ENCODE measurements at regions of chr15 and their contacts with region 1.

Region 1: DNA sequence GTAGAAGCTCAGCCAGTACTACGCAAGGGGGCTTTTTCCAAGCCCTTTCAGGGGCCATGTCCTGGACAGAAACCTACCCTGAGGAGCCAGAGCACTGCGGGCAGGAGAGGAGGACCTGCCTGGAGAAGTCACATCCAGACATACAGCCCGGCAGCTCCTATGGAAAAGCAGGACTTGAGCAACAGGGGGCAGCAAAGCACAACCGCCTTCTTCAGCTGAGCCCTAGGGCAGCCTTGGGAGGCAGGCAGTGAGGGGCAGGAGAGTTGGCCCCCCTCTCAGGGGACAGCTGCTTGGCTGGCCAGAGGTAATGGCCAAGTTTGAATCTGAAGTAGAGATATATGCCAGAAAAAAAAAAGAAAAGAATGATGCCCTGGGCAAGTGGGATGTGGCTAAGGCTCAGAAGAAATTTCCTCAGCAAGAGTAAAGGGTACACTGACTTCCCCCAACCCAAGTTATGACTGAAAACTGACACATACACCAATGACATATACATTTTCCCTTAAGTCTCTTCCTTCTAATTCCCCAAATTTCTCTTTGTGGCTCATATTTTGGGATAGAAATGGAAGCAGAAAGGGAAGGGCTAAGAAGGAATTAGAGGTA is 56.9 kb downstream of the CYP19A1 start:
- DNase-seq: no peak
- ATAC-seq: peak; percentile 93
- H3K4me3 ChIP-seq: no peak overlapping the region
- H3K27ac ChIP-seq: no peak overlapping the region
- H3K4me1 ChIP-seq: peaks cover 10% of the 10 kb centered on the region
- H3K27me3 ChIP-seq: peaks cover 0 to under 1% of the 10 kb centered on the region in 2 experiments; a peak in 1 of 4 replicates
- CTCF ChIP-seq: peak; percentile 61 to 71 (median 68); a peak in 5 of 6 replicates
- EP300 ChIP-seq: no peak
- POLR2A ChIP-seq: no peak
- RAD21 ChIP-seq: peak; percentile 75

Region 2: DNA sequence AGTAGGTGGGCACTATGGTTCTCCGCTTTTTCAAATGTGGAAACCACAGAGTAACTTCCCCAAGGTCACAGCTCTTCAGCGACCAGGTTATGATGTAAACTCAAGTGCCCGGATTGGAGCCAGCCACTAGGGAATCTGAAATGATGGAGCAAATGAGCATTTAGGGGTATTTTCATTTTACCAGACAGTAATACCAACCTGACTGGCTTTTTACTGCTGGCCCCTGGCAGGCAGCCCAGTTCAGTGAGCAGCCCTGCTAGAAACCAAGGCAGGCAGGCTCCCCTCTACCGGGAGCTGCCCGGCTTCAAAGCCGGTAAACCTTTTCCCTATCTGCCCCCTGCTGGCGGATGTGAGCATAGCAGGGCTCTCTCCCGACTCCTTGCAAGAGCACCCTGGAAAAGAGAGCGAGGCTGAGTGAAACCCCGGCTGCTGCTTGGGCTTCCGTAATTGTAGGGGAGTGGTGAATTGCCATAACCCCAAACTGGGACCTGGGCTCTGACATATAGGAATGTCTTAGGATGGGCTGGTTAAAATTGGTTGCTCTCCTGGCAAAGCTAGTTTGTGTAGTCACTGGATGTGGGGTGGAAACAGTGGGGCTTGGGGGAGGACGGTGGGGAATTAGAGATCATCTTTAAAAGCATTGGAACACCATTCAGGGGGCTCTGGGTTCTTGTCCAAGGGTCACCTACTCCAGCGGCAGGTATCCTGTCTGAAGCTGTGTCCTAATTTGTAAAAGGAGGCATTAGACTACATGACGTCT is 88.8 kb before region 1 on chr15:
- CTCF ChIA-PET with region 1: interaction called, 7 read pairs
- POLR2A ChIA-PET with region 1: no interaction called
- RAD21 ChIA-PET with region 1: interaction called, 3 read pairs
- SMC1A ChIA-PET with region 1: interaction called, 12 read pairs
- in situ Hi-C with region 1: no loop called
- intact Hi-C with region 1: no loop called
- DNase-seq: peak; percentile 20
- ATAC-seq: peak; percentile 97
- H3K4me3 ChIP-seq: no peak overlapping the region
- H3K27ac ChIP-seq: no peak overlapping the region
- H3K4me1 ChIP-seq: no peaks in the 10 kb centered on the region
- H3K27me3 ChIP-seq: no peaks in the 10 kb centered on the region; a peak in 2 of 4 replicates
- CTCF ChIP-seq: peak; percentile 91 to 96 (median 92)
- EP300 ChIP-seq: no peak
- POLR2A ChIP-seq: no peak
- RAD21 ChIP-seq: peak; percentile 79

Region 3: GRCh38 chr15:51202783-51203182 is 78.7 kb before region 1 on chr15:
- CTCF ChIA-PET with region 1: no interaction called
- POLR2A ChIA-PET with region 1: no interaction called
- RAD21 ChIA-PET with region 1: no interaction called
- SMC1A ChIA-PET with region 1: no interaction called
- in situ Hi-C with region 1: no loop called
- intact Hi-C with region 1: no loop called
- DNase-seq: no peak
- ATAC-seq: no peak
- H3K4me3 ChIP-seq: no peak overlapping the region
- H3K27ac ChIP-seq: no peak overlapping the region
- H3K4me1 ChIP-seq: no peaks in the 10 kb centered on the region
- H3K27me3 ChIP-seq: peaks cover 0 to 4% of the 10 kb centered on the region in 2 experiments; a peak in 1 of 4 replicates
- CTCF ChIP-seq: no peak
- EP300 ChIP-seq: no peak
- POLR2A ChIP-seq: no peak
- RAD21 ChIP-seq: no peak

Region 4: DNA sequence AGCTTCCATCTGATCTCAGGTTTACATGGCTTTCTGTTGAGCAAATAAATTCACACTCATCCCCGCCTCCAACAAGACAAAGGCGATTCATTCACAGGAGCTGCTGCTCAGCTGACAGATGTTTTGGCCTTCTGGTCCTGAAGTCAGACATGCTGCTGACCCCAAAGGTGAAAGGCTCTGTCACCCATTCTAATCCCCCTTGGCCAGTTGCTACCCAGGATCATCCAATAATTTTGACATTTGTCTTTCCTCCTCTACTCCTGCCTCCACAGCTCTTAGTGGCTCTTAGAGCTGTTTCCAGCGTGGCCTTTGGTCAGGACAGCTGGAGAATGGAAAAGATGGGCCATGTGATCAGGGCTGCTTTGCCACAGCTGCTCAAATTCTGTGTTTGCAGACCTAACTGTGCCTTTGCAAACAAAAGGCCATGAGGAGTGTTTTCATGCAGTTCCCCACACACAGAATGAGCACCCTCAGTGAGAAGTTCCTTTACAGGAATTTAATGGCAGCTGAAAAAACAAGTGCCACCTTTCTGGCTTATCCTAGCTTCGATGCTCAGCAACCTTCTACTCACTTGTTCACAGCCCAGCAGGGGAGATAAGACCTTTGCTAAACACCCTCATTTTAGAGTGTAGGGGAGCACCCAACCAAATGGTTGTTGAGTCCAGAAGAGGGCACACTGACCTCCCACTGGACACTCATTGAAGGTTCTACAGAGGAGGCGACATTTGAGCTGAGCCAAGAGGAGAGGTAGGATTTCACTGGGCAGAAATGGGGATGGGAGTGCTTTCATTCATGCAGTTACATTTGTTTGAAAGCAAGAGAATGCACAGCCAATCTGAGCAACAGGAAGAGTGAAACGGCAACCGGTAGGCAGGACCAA is 18.0 kb after region 1 on chr15:
- CTCF ChIA-PET with region 1: interaction called, 43 read pairs
- POLR2A ChIA-PET with region 1: no interaction called
- RAD21 ChIA-PET with region 1: interaction called, 7 read pairs
- SMC1A ChIA-PET with region 1: interaction called, 31 read pairs
- in situ Hi-C with region 1: no loop called
- intact Hi-C with region 1: no loop called
- DNase-seq: no peak
- ATAC-seq: no peak
- H3K4me3 ChIP-seq: no peak overlapping the region
- H3K27ac ChIP-seq: no peak overlapping the region
- H3K4me1 ChIP-seq: no peaks in the 10 kb centered on the region
- H3K27me3 ChIP-seq: peaks cover 0 to 3% of the 10 kb centered on the region in 2 experiments; a peak in 3 of 4 replicates
- CTCF ChIP-seq: no peak
- EP300 ChIP-seq: no peak
- POLR2A ChIP-seq: no peak
- RAD21 ChIP-seq: no peak

Region 5: GRCh38 chr15:51314426-51315337 is 33.2 kb after region 1 on chr15:
- CTCF ChIA-PET with region 1: no interaction called
- POLR2A ChIA-PET with region 1: no interaction called
- RAD21 ChIA-PET with region 1: no interaction called
- SMC1A ChIA-PET with region 1: no interaction called
- in situ Hi-C with region 1: no loop called
- intact Hi-C with region 1: no loop called
- DNase-seq: no peak
- ATAC-seq: no peak
- H3K4me3 ChIP-seq: no peak overlapping the region
- H3K27ac ChIP-seq: no peak overlapping the region
- H3K4me1 ChIP-seq: no peaks in the 10 kb centered on the region
- H3K27me3 ChIP-seq: peaks cover 0 to 8% of the 10 kb centered on the region in 2 experiments; a peak in 2 of 4 replicates
- CTCF ChIP-seq: no peak
- EP300 ChIP-seq: no peak
- POLR2A ChIP-seq: no peak
- RAD21 ChIP-seq: no peak

Region 6: DNA sequence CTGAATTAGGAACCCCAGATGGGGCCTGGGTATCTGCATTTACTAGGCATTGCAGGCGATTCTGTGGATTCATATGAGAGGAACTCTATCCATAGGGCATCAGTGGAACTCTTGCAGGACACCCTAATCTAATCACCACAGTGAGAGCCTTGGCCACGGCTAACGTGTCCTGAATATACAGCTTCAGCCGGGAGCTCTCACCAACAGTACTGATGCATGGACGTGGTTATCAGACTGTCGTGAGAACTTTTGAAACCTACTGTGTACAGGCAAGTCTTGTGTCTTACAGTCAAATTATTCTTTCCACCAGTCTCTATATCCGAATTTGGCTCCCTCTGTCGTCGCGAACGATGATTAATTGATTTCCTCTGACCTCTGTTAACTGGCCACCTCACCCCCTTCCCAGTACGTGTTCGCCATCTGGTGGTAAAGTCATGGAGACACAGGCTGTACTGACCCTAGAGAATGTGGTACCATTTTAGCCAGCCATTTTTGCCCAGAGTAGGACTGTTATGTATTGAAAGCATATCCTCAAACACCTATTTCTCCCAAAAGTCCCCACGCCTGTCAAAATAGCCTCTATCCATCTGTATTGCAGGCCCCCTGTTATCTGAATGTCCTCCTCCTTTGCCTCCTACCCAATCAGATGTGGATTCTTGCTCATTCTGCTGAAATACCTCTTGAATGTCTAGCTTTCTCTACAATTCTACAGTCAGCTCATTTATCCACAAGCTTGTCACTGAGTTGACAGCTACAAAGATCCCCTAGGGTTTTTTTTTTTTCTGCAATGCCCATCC is 99.7 kb after region 1 on chr15:
- CTCF ChIA-PET with region 1: interaction called, 111 read pairs
- POLR2A ChIA-PET with region 1: no interaction called
- RAD21 ChIA-PET with region 1: interaction called, 32 read pairs
- SMC1A ChIA-PET with region 1: interaction called, 60 read pairs
- in situ Hi-C with region 1: loop called (anchors 5 kb)
- intact Hi-C with region 1: loop called (anchors 1 kb)
- DNase-seq: peak; percentile 34
- ATAC-seq: peak; percentile 98
- H3K4me3 ChIP-seq: no peak overlapping the region
- H3K27ac ChIP-seq: no peak overlapping the region
- H3K4me1 ChIP-seq: no peaks in the 10 kb centered on the region
- H3K27me3 ChIP-seq: peaks cover 0 to 6% of the 10 kb centered on the region in 2 experiments; a peak in 3 of 4 replicates
- CTCF ChIP-seq: peak; percentile 81 to 99 (median 97); a peak in 5 of 6 replicates
- EP300 ChIP-seq: no peak
- POLR2A ChIP-seq: no peak
- RAD21 ChIP-seq: peak; percentile 98

Region 7: DNA sequence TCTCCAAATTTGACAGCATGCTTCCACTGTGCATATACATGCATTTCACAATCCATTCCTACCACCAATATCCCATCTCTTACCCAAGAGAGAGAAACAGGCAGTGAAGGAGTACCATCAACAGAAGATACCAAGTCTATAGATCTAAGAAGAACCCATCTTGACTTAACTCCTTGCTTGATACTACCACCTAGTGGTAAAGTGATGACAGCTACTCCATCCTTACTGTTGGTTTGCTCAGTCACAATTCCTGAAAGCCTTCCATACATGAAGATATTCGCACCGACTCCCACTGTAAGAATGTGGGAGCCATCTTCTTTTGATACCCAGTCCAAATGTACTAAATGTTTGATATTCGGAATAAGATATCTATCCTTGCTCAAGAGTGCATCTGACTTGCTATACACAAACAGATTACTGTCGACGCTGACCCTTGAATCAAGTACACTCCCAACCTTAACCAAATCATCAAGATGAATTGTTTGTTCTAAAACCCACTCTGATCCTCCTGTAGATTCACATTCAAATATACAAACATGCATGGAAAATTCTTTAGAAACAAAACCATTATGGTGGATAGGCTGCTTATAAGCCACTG is 218.0 kb after region 1 on chr15:
- CTCF ChIA-PET with region 1: interaction called, 12 read pairs
- POLR2A ChIA-PET with region 1: no interaction called
- RAD21 ChIA-PET with region 1: interaction called, 7 read pairs
- SMC1A ChIA-PET with region 1: interaction called, 5 read pairs
- in situ Hi-C with region 1: no loop called
- intact Hi-C with region 1: loop called (anchors 5 kb)
- DNase-seq: no peak
- ATAC-seq: peak; percentile 87
- H3K4me3 ChIP-seq: no peak overlapping the region
- H3K27ac ChIP-seq: no peak overlapping the region
- H3K4me1 ChIP-seq: no peaks in the 10 kb centered on the region
- H3K27me3 ChIP-seq: no peaks in the 10 kb centered on the region
- CTCF ChIP-seq: peak; percentile 60 to 72 (median 68)
- EP300 ChIP-seq: no peak
- POLR2A ChIP-seq: no peak
- RAD21 ChIP-seq: peak; percentile 65

Measured in GM12878 (cell line).